ENCODE measurements at regions of chr16 and their contacts with region 1.

Region 1: GRCh38 chr16:73152386-73153125 is 104.6 kb upstream of the ZFHX3 start:
- DNase-seq: no peak
- ATAC-seq: no peak
- H3K4me3 ChIP-seq: no peak overlapping the region
- H3K27ac ChIP-seq: no peak overlapping the region
- H3K4me1 ChIP-seq: no peaks in the 10 kb centered on the region
- H3K27me3 ChIP-seq: no peaks in the 10 kb centered on the region
- CTCF ChIP-seq: no peak

Region 2: GRCh38 chr16:72723781-72724180 is 428.8 kb before region 1 on chr16:
- CTCF ChIA-PET with region 1: interaction called, 13 read pairs
- POLR2A ChIA-PET with region 1: no interaction called
- in situ Hi-C with region 1: no loop called
- intact Hi-C with region 1: no loop called
- DNase-seq: no peak
- ATAC-seq: no peak
- H3K4me3 ChIP-seq: no peak overlapping the region
- H3K27ac ChIP-seq: no peak overlapping the region
- H3K4me1 ChIP-seq: no peaks in the 10 kb centered on the region
- H3K27me3 ChIP-seq: no peaks in the 10 kb centered on the region
- CTCF ChIP-seq: no peak

Region 3: GRCh38 chr16:73131156-73131862 is 21.2 kb before region 1 on chr16:
- CTCF ChIA-PET with region 1: no interaction called
- POLR2A ChIA-PET with region 1: no interaction called
- in situ Hi-C with region 1: no loop called
- intact Hi-C with region 1: no loop called
- DNase-seq: no peak
- ATAC-seq: no peak
- H3K4me3 ChIP-seq: no peak overlapping the region
- H3K27ac ChIP-seq: no peak overlapping the region
- H3K4me1 ChIP-seq: no peaks in the 10 kb centered on the region
- H3K27me3 ChIP-seq: no peaks in the 10 kb centered on the region
- CTCF ChIP-seq: no peak

Region 4: DNA sequence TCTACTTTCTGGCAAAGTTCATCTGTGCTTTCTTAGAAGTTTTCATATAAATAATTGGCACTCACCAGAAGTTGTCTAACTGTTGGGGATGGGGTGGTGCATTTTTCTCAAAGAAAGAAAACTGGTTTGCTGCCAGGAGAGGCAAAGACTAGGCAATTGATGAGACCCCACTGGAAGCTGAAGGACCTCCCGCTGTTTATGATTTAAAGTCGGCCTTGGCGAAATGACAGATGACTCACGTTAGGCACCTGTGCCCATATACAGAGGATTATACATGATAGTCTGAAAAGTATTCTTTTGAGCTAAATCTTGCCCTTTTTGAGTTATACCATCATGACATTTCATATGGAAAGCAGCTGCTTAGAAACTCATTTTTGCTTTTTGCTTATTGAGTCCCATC is 88.4 kb after region 1 on chr16:
- CTCF ChIA-PET with region 1: no interaction called
- POLR2A ChIA-PET with region 1: no interaction called
- in situ Hi-C with region 1: no loop called
- intact Hi-C with region 1: no loop called
- DNase-seq: no peak
- ATAC-seq: no peak
- H3K4me3 ChIP-seq: no peak overlapping the region
- H3K27ac ChIP-seq: no peak overlapping the region
- H3K4me1 ChIP-seq: no peaks in the 10 kb centered on the region
- H3K27me3 ChIP-seq: no peaks in the 10 kb centered on the region; the same call in 1 of the 2 replicates
- CTCF ChIP-seq: no peak

Measured in Panc1 (cell line).